HEK293 (cell line): ENCODE measurements at regions of chr13 and their contacts with region 1.

Region 1: DNA sequence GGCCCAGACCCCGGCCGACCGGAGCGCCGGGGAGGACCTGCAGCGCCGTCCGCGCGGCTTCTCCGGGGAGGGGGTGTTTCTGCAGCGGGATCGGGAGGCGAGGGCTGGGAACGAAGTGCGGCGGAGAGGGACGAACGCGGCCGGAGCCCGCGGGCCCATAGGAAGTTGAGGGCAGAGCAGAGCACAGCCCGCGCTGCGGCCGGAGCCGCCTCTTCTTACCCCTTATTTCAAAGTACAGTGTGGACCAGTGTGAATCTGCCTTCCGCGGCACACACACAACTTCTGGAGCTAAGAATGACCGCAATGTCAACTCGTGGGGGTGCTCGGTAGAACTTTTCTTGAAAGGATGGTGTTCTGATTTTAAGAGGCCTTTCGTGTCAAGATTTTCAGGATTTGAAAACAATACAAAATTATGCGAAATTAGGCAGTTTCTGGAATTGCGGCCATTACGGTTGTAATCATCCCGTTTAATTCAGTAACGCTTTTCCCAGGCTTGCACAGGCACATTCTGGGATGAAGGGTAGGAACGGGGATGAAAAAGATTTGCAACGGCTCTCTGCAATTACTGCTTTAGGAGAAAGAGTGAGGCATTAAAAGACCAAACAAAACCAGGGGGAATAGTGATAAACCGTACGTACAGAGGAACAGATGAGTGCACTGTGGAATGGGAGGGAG is 821 bp downstream of the TDRD3 start:
- H3K4me3 ChIP-seq: peak overlapping the region; percentile 72
- H3K27ac ChIP-seq: peak overlapping the region; percentile 90
- H3K4me1 ChIP-seq: peaks cover 4% of the 10 kb centered on the region; the same call in 1 of the 2 replicates
- CTCF ChIP-seq: no peak

Region 2: DNA sequence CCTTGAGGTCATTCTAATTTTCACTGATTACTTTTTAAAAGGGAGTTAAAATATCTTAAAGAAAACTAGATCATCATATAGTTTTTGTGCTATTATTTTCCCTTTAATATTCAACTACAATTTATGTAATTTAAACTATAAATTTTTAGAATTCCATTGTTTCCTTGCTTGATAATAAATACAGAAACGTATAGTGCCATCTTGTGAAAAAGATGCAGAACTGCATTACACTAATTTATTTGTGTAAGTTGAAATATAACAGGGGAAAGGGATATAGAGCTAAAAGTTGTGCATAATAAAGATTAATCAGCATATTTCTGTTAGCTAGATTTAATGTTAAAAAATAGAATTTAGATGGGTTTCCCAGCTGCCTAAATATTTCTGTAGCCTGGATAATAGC is 62.3 kb before region 1 on chr13:
- CTCF ChIA-PET with region 1: interaction called, 10 read pairs
- POLR2A ChIA-PET with region 1: no interaction called
- H3K4me3 ChIP-seq: no peak overlapping the region
- H3K27ac ChIP-seq: no peak overlapping the region
- H3K4me1 ChIP-seq: no peaks in the 10 kb centered on the region
- CTCF ChIP-seq: no peak